ENCODE measurements at regions of chr9 and their contacts with region 1.

Region 1: GRCh38 chr9:7164440-7165348 is 406.9 kb downstream of the KDM4C start:
- DNase-seq: no peak
- ATAC-seq: no peak
- H3K4me3 ChIP-seq: no peak overlapping the region
- H3K27ac ChIP-seq: no peak overlapping the region
- H3K4me1 ChIP-seq: peaks cover 0 to 18% (median 0%) of the 10 kb centered on the region in 12 donors
- H3K27me3 ChIP-seq: no peaks in the 10 kb centered on the region
- CTCF ChIP-seq: no peak
- POLR2A ChIP-seq: no peak

Region 2: GRCh38 chr9:7088611-7089010 is 76.1 kb before region 1 on chr9:
- intact Hi-C with region 1: loop called in 1 of 10 experiments (anchors 5 kb)
- DNase-seq: no peak
- ATAC-seq: peak in 2 of 4 donors; percentile 26 to 61
- H3K4me3 ChIP-seq: no peak overlapping the region
- H3K27ac ChIP-seq: peak overlapping the region in 4 of 12 donors; percentile 10 to 70 (median 38)
- H3K4me1 ChIP-seq: peaks cover 0 to 15% (median 5%) of the 10 kb centered on the region in 12 donors
- H3K27me3 ChIP-seq: no peaks in the 10 kb centered on the region
- CTCF ChIP-seq: no peak
- POLR2A ChIP-seq: no peak

Region 3: GRCh38 chr9:7111413-7111812 is 53.3 kb before region 1 on chr9:
- intact Hi-C with region 1: loop called in 1 of 10 experiments (anchors 5 kb)
- DNase-seq: no peak
- ATAC-seq: no peak
- H3K4me3 ChIP-seq: no peak overlapping the region
- H3K27ac ChIP-seq: no peak overlapping the region
- H3K4me1 ChIP-seq: peaks cover 0 to 3% (median 0%) of the 10 kb centered on the region in 12 donors
- H3K27me3 ChIP-seq: no peaks in the 10 kb centered on the region
- CTCF ChIP-seq: no peak
- POLR2A ChIP-seq: no peak